HepG2 (cell line): ENCODE measurements at regions of chr10 and their contacts with region 1.

Region 1: GRCh38 chr10:60434418-60435046 is 44.9 kb upstream of the ANK3 start:
- DNase-seq: peak; percentile 35
- ATAC-seq: peak; percentile 70
- H3K4me3 ChIP-seq: no peak overlapping the region
- H3K27ac ChIP-seq: no peak overlapping the region
- H3K4me1 ChIP-seq: no peaks in the 10 kb centered on the region
- H3K27me3 ChIP-seq: no peaks in the 10 kb centered on the region
- CTCF ChIP-seq: peak; percentile 73
- EP300 ChIP-seq: no peak
- POLR2A ChIP-seq: no peak
- RAD21 ChIP-seq: peak; percentile 66; the same call in 1 of the 2 replicates

Region 2: GRCh38 chr10:60099998-60100747 is 334.4 kb before region 1 on chr10:
- CTCF ChIA-PET with region 1: interaction called, 22 read pairs
- POLR2A ChIA-PET with region 1: no interaction called
- in situ Hi-C with region 1: loop called (anchors 5 kb)
- intact Hi-C with region 1: loop called (anchors 1 kb)
- DNase-seq: peak; percentile 39
- ATAC-seq: peak; percentile 49
- H3K4me3 ChIP-seq: no peak overlapping the region
- H3K27ac ChIP-seq: no peak overlapping the region
- H3K4me1 ChIP-seq: peaks cover 8% of the 10 kb centered on the region
- H3K27me3 ChIP-seq: no peaks in the 10 kb centered on the region
- CTCF ChIP-seq: peak; percentile 55
- EP300 ChIP-seq: no peak
- POLR2A ChIP-seq: no peak
- RAD21 ChIP-seq: no peak

Region 3: GRCh38 chr10:60208676-60209269 is 225.8 kb before region 1 on chr10:
- CTCF ChIA-PET with region 1: interaction called, 18 read pairs
- POLR2A ChIA-PET with region 1: no interaction called
- in situ Hi-C with region 1: loop called (anchors 10 kb)
- intact Hi-C with region 1: loop called (anchors 1 kb)
- DNase-seq: peak; percentile 18
- ATAC-seq: 0 out of 3 replicates have a peak, but pooled peaks have one; percentile 41
- H3K4me3 ChIP-seq: no peak overlapping the region
- H3K27ac ChIP-seq: no peak overlapping the region
- H3K4me1 ChIP-seq: no peaks in the 10 kb centered on the region
- H3K27me3 ChIP-seq: no peaks in the 10 kb centered on the region
- CTCF ChIP-seq: peak; percentile 64
- EP300 ChIP-seq: no peak
- POLR2A ChIP-seq: no peak
- RAD21 ChIP-seq: peak; percentile 32; the same call in 1 of the 2 replicates

Region 4: DNA sequence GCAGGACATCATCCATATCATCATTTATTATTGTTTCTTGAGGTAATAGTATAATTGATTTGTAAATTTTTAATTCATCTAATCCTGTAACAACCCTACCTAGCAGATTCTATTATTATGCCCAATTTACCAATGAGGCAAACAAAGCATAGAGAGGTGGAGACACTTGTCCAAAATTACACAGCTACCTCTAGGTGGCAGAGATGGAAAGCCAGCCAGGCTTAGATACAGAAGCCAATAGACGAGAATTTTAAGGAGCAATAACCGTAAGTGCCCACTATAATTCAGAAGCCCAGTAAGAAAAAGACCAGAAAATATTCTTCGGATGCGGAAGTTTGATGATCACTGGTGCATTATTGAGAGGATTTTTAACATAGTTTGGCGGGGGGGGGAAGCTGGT is 98.8 kb before region 1 on chr10:
- CTCF ChIA-PET with region 1: interaction called, 4 read pairs
- POLR2A ChIA-PET with region 1: no interaction called
- in situ Hi-C with region 1: no loop called
- intact Hi-C with region 1: loop called (anchors 1 kb)
- DNase-seq: peak; percentile 19
- ATAC-seq: peak; percentile 51
- H3K4me3 ChIP-seq: no peak overlapping the region
- H3K27ac ChIP-seq: no peak overlapping the region
- H3K4me1 ChIP-seq: no peaks in the 10 kb centered on the region
- H3K27me3 ChIP-seq: no peaks in the 10 kb centered on the region
- CTCF ChIP-seq: peak; percentile 42
- EP300 ChIP-seq: no peak
- POLR2A ChIP-seq: no peak
- RAD21 ChIP-seq: no peak

Region 5: DNA sequence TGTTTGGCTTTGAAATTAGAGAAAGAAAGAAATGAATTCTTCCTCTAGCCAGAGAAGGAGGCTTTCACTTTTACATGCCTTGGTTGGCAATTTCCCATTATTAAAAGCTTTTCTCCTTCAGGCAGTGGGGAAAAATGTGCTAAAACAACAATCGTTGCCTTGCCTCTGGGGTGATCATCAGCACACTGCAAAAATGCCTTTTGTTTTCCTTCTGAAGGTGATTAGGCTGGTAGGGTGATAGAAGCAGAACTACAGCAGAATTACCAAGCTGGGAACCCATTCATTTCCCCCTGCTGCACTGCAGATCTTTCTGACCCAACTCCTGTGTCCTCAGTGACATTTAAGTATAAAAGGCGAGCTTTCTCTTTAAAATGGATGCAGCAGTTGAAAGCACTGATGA is 67.1 kb before region 1 on chr10:
- CTCF ChIA-PET with region 1: no interaction called
- POLR2A ChIA-PET with region 1: no interaction called
- in situ Hi-C with region 1: no loop called
- intact Hi-C with region 1: no loop called
- DNase-seq: no peak
- ATAC-seq: no peak
- H3K4me3 ChIP-seq: no peak overlapping the region
- H3K27ac ChIP-seq: no peak overlapping the region
- H3K4me1 ChIP-seq: no peaks in the 10 kb centered on the region
- H3K27me3 ChIP-seq: no peaks in the 10 kb centered on the region
- CTCF ChIP-seq: no peak
- EP300 ChIP-seq: no peak
- POLR2A ChIP-seq: no peak
- RAD21 ChIP-seq: no peak

Region 6: DNA sequence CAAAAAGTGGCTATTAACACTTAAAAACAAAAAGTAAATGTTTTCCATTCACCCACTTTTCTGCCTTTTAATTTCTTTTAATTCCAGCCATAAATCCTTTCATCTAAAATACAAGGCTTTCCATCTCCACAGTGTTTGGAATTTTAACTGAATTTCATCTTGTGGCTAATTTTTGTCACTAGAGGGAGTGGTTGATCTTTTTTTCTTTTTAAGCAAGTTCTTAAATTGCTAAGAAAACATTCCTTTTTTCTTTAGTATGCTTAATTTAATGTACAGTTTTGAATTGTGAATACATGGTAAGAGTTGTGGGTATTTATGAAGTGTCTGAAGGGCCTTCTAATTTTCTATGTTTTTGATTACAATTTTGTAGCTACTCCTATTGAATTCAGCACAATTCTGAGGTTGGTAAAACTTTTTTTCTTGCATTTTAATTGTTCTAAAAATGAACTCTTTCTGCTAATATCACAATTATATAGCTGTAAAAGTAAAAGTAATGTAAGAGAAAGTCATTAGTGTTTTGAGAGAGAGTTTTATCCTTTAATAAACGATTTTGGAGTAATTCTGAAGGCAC is 10.0 kb after region 1 on chr10:
- CTCF ChIA-PET with region 1: no interaction called
- POLR2A ChIA-PET with region 1: no interaction called
- in situ Hi-C with region 1: no loop called
- intact Hi-C with region 1: no loop called
- DNase-seq: peak; percentile 4
- ATAC-seq: no peak
- H3K4me3 ChIP-seq: no peak overlapping the region
- H3K27ac ChIP-seq: no peak overlapping the region
- H3K4me1 ChIP-seq: no peaks in the 10 kb centered on the region
- H3K27me3 ChIP-seq: no peaks in the 10 kb centered on the region
- CTCF ChIP-seq: peak; percentile 36
- EP300 ChIP-seq: no peak
- POLR2A ChIP-seq: no peak
- RAD21 ChIP-seq: no peak